ENCODE measurements at regions of chr6 and their contacts with region 1.

Region 1: DNA sequence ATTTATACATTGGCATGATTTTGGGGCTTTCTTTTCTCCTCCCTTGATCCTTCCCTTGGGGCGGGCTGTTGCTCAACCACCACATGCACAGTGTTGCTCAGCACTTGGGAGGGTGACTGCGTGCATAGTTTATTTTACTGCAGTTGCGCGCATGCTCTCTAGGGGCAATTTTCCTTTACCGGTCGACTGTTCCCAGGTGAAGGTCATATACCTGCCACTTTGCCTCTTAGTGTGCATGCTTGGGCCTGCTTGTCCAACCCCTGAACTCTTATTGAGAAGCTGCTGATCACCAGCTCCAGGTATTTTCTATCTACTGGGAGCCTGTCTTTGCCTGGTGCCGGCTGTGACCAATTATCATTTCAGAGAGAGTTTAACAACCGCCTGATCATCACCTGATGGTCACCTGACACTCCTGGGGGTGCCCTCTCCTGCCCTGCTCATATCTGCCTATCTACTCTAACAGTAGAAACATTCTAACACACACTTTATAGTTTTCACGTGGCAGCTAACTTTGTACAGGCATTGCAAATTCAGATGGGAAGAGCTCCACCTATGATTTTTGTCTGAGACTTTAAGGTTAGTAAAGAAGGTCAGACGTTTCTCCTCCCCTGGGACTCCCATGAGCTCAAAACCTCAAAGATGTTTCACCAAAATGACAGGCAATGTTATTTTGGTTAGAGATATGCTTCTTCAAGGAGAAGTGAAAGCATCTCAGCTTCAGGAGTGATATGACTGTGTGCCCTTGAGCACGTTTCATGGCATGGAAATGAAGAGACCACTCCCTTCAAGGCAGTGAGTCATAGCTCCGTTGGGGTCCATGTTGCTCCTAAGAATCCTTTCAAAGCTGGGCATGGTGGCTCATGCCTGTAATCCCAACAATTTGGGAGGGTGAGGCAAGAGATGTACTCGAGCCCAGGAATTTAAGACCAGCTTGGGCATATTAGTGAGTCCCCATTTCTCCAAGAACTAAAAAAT is 227.5 kb upstream of the MYLIP start:
- DNase-seq: peak; percentile 99
- ATAC-seq: peak; percentile 90
- H3K4me3 ChIP-seq: no peak overlapping the region; the same call in 1 of the 2 replicates
- H3K27ac ChIP-seq: peak overlapping the region; percentile 96
- H3K4me1 ChIP-seq: peaks cover 60% of the 10 kb centered on the region
- H3K27me3 ChIP-seq: no peaks in the 10 kb centered on the region
- CTCF ChIP-seq: peak in 1 of 3 experiments; percentile 17; a peak in 1 of 6 replicates
- EP300 ChIP-seq: peak; percentile 97 to 99
- POLR2A ChIP-seq: no peak
- RAD21 ChIP-seq: peak; percentile 35; the same call in 1 of the 2 replicates

Region 2: GRCh38 chr6:15441215-15441868 is 460.1 kb before region 1 on chr6:
- CTCF ChIA-PET with region 1: no interaction called
- POLR2A ChIA-PET with region 1: no interaction called
- RAD21 ChIA-PET with region 1: no interaction called
- SMC1A ChIA-PET with region 1: no interaction called
- in situ Hi-C with region 1: no loop called
- intact Hi-C with region 1: no loop called
- DNase-seq: no peak
- ATAC-seq: peak; percentile 74
- H3K4me3 ChIP-seq: no peak overlapping the region
- H3K27ac ChIP-seq: no peak overlapping the region
- H3K4me1 ChIP-seq: peaks cover 29% of the 10 kb centered on the region
- H3K27me3 ChIP-seq: no peaks in the 10 kb centered on the region
- CTCF ChIP-seq: peak; percentile 79 to 83 (median 79)
- EP300 ChIP-seq: no peak
- POLR2A ChIP-seq: no peak
- RAD21 ChIP-seq: peak; percentile 87

Region 3: GRCh38 chr6:15682965-15683822 is 218.2 kb before region 1 on chr6:
- CTCF ChIA-PET with region 1: interaction called, 5 read pairs
- POLR2A ChIA-PET with region 1: interaction called, 3 read pairs
- RAD21 ChIA-PET with region 1: interaction called, 17 read pairs
- SMC1A ChIA-PET with region 1: interaction called, 24 read pairs
- in situ Hi-C with region 1: no loop called
- intact Hi-C with region 1: no loop called
- DNase-seq: peak; percentile 40
- ATAC-seq: peak; percentile 93
- H3K4me3 ChIP-seq: no peak overlapping the region
- H3K27ac ChIP-seq: no peak overlapping the region
- H3K4me1 ChIP-seq: 0 out of 2 replicates have a peak, but pooled peaks cover 3% of the 10 kb centered on the region
- H3K27me3 ChIP-seq: 0 out of 4 replicates have a peak, but pooled peaks cover 0 to 3% of the 10 kb centered on the region in 2 experiments
- CTCF ChIP-seq: no peak
- EP300 ChIP-seq: peak; percentile 57 to 68; a peak in 3 of 4 replicates
- POLR2A ChIP-seq: no peak
- RAD21 ChIP-seq: no peak

Region 4: DNA sequence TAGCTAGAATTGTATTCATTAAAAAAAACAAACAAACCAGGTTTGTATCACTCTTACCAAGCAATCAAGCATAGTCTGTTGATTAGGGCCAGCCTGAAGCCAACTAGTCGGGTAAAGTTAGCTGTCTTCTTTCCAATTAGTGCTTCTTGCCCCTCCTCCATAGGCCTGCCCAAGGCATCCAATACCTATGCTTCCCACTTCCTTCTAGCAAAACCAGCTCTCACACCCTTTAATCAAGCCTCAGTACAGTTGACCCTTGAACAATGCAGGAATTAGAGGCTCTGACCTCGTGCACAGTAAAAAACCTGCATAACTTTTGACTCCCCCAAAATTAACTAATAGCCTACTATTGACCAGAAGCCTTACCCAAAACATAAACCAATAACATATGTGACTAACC is 119.5 kb before region 1 on chr6:
- CTCF ChIA-PET with region 1: interaction called, 28 read pairs
- POLR2A ChIA-PET with region 1: interaction called, 25 read pairs
- RAD21 ChIA-PET with region 1: interaction called, 130 read pairs
- SMC1A ChIA-PET with region 1: interaction called, 198 read pairs
- in situ Hi-C with region 1: no loop called
- intact Hi-C with region 1: loop called (anchors 2 kb)
- DNase-seq: no peak
- ATAC-seq: no peak
- H3K4me3 ChIP-seq: no peak overlapping the region
- H3K27ac ChIP-seq: no peak overlapping the region
- H3K4me1 ChIP-seq: no peaks in the 10 kb centered on the region
- H3K27me3 ChIP-seq: no peaks in the 10 kb centered on the region
- CTCF ChIP-seq: no peak
- EP300 ChIP-seq: no peak
- POLR2A ChIP-seq: no peak
- RAD21 ChIP-seq: no peak

Region 5: GRCh38 chr6:15879382-15880261 is 21.8 kb before region 1 on chr6:
- CTCF ChIA-PET with region 1: interaction called, 21 read pairs
- POLR2A ChIA-PET with region 1: interaction called, 12 read pairs
- RAD21 ChIA-PET with region 1: interaction called, 134 read pairs
- SMC1A ChIA-PET with region 1: interaction called, 183 read pairs
- in situ Hi-C with region 1: no loop called
- intact Hi-C with region 1: loop called (anchors 1 kb)
- DNase-seq: no peak
- ATAC-seq: peak; percentile 81
- H3K4me3 ChIP-seq: no peak overlapping the region
- H3K27ac ChIP-seq: peak overlapping the region; percentile 61
- H3K4me1 ChIP-seq: peaks cover 18% of the 10 kb centered on the region
- H3K27me3 ChIP-seq: no peaks in the 10 kb centered on the region
- CTCF ChIP-seq: no peak
- EP300 ChIP-seq: 0 out of 4 replicates have a peak, but pooled peaks of 1 of the 2 experiments have one; percentile 25
- POLR2A ChIP-seq: no peak
- RAD21 ChIP-seq: no peak

Region 6: GRCh38 chr6:15948930-15949900 is 47.8 kb after region 1 on chr6:
- CTCF ChIA-PET with region 1: interaction called, 10 read pairs
- POLR2A ChIA-PET with region 1: interaction called, 5 read pairs
- RAD21 ChIA-PET with region 1: interaction called, 60 read pairs
- SMC1A ChIA-PET with region 1: interaction called, 88 read pairs
- in situ Hi-C with region 1: no loop called
- intact Hi-C with region 1: loop called (anchors 2 kb)
- DNase-seq: no peak
- ATAC-seq: no peak
- H3K4me3 ChIP-seq: no peak overlapping the region
- H3K27ac ChIP-seq: no peak overlapping the region
- H3K4me1 ChIP-seq: peaks cover 19% of the 10 kb centered on the region
- H3K27me3 ChIP-seq: no peaks in the 10 kb centered on the region
- CTCF ChIP-seq: no peak
- EP300 ChIP-seq: no peak
- POLR2A ChIP-seq: no peak
- RAD21 ChIP-seq: no peak

Region 7: GRCh38 chr6:16078064-16078463 is 176.6 kb after region 1 on chr6:
- CTCF ChIA-PET with region 1: no interaction called
- POLR2A ChIA-PET with region 1: no interaction called
- RAD21 ChIA-PET with region 1: interaction called, 12 read pairs
- SMC1A ChIA-PET with region 1: interaction called, 10 read pairs
- in situ Hi-C with region 1: no loop called
- intact Hi-C with region 1: no loop called
- DNase-seq: peak; percentile 44
- ATAC-seq: peak; percentile 87
- H3K4me3 ChIP-seq: no peak overlapping the region
- H3K27ac ChIP-seq: no peak overlapping the region
- H3K4me1 ChIP-seq: peaks cover 12% of the 10 kb centered on the region
- H3K27me3 ChIP-seq: no peaks in the 10 kb centered on the region
- CTCF ChIP-seq: no peak
- EP300 ChIP-seq: no peak
- POLR2A ChIP-seq: no peak
- RAD21 ChIP-seq: 0 out of 2 replicates have a peak, but pooled peaks have one; percentile 1

Region 8: DNA sequence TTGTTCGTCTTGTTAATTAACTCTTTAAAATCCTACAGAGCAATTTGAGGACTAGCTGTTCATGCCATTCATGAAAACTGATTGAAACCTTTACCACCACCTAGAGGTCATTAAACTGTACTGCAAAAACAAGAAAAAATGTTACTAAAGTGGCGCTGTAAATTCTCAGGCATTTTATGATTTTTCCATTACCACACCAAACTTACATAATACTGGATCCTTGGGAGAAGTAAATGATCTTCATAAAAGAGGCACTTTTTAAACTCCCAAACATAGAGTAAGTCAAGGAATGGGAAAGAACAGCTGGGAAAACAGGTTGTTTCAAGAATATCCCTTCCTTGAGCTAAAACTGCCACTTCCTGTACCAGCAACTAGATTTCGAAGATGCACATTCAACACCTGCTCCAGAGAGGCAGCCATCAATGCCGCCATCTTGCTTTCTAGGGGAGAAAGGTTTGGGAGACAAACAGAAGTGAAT is 281.8 kb after region 1 on chr6:
- CTCF ChIA-PET with region 1: interaction called, 19 read pairs
- POLR2A ChIA-PET with region 1: interaction called, 7 read pairs
- RAD21 ChIA-PET with region 1: interaction called, 28 read pairs
- SMC1A ChIA-PET with region 1: interaction called, 18 read pairs
- in situ Hi-C with region 1: no loop called
- intact Hi-C with region 1: loop called (anchors 1 kb)
- DNase-seq: peak; percentile 35
- ATAC-seq: peak; percentile 65
- H3K4me3 ChIP-seq: no peak overlapping the region
- H3K27ac ChIP-seq: no peak overlapping the region
- H3K4me1 ChIP-seq: no peaks in the 10 kb centered on the region
- H3K27me3 ChIP-seq: no peaks in the 10 kb centered on the region; a peak in 1 of 4 replicates
- CTCF ChIP-seq: peak; percentile 61 to 79 (median 63)
- EP300 ChIP-seq: no peak
- POLR2A ChIP-seq: no peak
- RAD21 ChIP-seq: peak; percentile 78